ENCODE measurements at regions of chr7 and their contacts with region 1.

Region 1: GRCh38 chr7:99997545-99998137 is 17.8 kb upstream of the ZKSCAN1 start:
- DNase-seq: peak; percentile 81
- ATAC-seq: peak; percentile 90
- H3K4me3 ChIP-seq: peak overlapping the region in 4 of 5 experiments; percentile 59 to 85 (median 68)
- H3K4me3 Mint-ChIP-seq: peak overlapping the region; percentile 83
- H3K27ac ChIP-seq: peak overlapping the region; percentile 58 to 82
- H3K27ac Mint-ChIP-seq: peak overlapping the region; percentile 80
- H3K4me1 ChIP-seq: peaks cover 13 to 14% of the 10 kb centered on the region in 2 donors
- H3K4me1 Mint-ChIP-seq: peaks cover 10% of the 10 kb centered on the region
- H3K27me3 ChIP-seq: peaks cover 0 to 6% (median 0%) of the 10 kb centered on the region in 4 experiments
- H3K27me3 Mint-ChIP-seq: peaks cover 8% of the 10 kb centered on the region
- CTCF ChIP-seq: no peak

Region 2: DNA sequence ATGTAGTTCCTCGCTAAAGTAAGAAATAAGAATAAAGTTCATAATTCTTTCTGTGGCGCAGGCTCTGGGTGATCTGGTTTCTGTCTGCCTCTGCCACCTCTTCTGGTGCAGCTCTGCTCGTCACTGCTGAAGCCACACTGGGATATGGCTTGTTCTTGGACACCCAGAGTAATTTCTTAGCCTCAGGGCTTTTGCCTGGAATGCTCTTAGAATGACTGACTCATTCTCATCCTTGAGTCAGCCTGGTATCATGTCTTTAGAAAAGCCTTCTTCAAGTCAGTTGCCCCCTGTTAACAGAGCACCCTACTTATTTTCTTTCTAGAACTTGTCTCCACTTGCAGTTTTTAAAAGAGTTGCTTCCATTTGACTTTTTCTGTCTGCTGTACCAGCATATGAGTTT is 378.9 kb before region 1 on chr7:
- CTCF ChIA-PET with region 1: no interaction called
- POLR2A ChIA-PET with region 1: no interaction called
- intact Hi-C with region 1: no loop called
- DNase-seq: no peak
- ATAC-seq: no peak
- H3K4me3 ChIP-seq: no peak overlapping the region
- H3K4me3 Mint-ChIP-seq: peak overlapping the region; percentile 98
- H3K27ac ChIP-seq: no peak overlapping the region
- H3K27ac Mint-ChIP-seq: no peak overlapping the region
- H3K4me1 ChIP-seq: peaks cover 17 to 18% of the 10 kb centered on the region in 2 donors
- H3K4me1 Mint-ChIP-seq: peaks cover 28% of the 10 kb centered on the region
- H3K27me3 ChIP-seq: no peaks in the 10 kb centered on the region
- H3K27me3 Mint-ChIP-seq: no peaks in the 10 kb centered on the region
- CTCF ChIP-seq: no peak

Region 3: GRCh38 chr7:99985444-99985843 is 12.2 kb before region 1 on chr7:
- CTCF ChIA-PET with region 1: interaction called, 35 read pairs
- POLR2A ChIA-PET with region 1: no interaction called
- intact Hi-C with region 1: no loop called
- DNase-seq: no peak
- ATAC-seq: no peak
- H3K4me3 ChIP-seq: no peak overlapping the region
- H3K4me3 Mint-ChIP-seq: no peak overlapping the region
- H3K27ac ChIP-seq: no peak overlapping the region
- H3K27ac Mint-ChIP-seq: no peak overlapping the region
- H3K4me1 ChIP-seq: no peaks in the 10 kb centered on the region
- H3K4me1 Mint-ChIP-seq: peaks cover 1% of the 10 kb centered on the region
- H3K27me3 ChIP-seq: peaks cover 0 to 5% (median 0%) of the 10 kb centered on the region in 4 experiments
- H3K27me3 Mint-ChIP-seq: peaks cover 40% of the 10 kb centered on the region
- CTCF ChIP-seq: no peak

Region 4: GRCh38 chr7:100015232-100016209 is 17.9 kb after region 1 on chr7 and contains the start of gene ZKSCAN1:
- CTCF ChIA-PET with region 1: interaction called, 6 read pairs
- POLR2A ChIA-PET with region 1: interaction called, 14 read pairs
- intact Hi-C with region 1: loop called (anchors 1 kb)
- DNase-seq: peak; percentile 91
- ATAC-seq: peak; percentile 95
- H3K4me3 ChIP-seq: peak within 1 kb of the TSS; percentile 75 to 89 (median 85)
- H3K4me3 Mint-ChIP-seq: peak within 1 kb of the TSS; percentile 93
- H3K27ac ChIP-seq: peak within 1 kb of the TSS; percentile 80 to 87
- H3K27ac Mint-ChIP-seq: peak within 1 kb of the TSS; percentile 94
- H3K4me1 ChIP-seq: peaks cover 15 to 19% of the 10 kb centered on the region in 2 donors
- H3K4me1 Mint-ChIP-seq: peaks cover 38% of the 10 kb centered on the region
- H3K27me3 ChIP-seq: no peaks in the 10 kb centered on the region
- H3K27me3 Mint-ChIP-seq: peaks cover 6% of the 10 kb centered on the region
- CTCF ChIP-seq: no peak
- total RNA-seq, gene ZKSCAN1: 89.3 and 97.4 TPM in 2 replicates